ENCODE measurements at regions of chr12 and their contacts with region 1.

Region 1: DNA sequence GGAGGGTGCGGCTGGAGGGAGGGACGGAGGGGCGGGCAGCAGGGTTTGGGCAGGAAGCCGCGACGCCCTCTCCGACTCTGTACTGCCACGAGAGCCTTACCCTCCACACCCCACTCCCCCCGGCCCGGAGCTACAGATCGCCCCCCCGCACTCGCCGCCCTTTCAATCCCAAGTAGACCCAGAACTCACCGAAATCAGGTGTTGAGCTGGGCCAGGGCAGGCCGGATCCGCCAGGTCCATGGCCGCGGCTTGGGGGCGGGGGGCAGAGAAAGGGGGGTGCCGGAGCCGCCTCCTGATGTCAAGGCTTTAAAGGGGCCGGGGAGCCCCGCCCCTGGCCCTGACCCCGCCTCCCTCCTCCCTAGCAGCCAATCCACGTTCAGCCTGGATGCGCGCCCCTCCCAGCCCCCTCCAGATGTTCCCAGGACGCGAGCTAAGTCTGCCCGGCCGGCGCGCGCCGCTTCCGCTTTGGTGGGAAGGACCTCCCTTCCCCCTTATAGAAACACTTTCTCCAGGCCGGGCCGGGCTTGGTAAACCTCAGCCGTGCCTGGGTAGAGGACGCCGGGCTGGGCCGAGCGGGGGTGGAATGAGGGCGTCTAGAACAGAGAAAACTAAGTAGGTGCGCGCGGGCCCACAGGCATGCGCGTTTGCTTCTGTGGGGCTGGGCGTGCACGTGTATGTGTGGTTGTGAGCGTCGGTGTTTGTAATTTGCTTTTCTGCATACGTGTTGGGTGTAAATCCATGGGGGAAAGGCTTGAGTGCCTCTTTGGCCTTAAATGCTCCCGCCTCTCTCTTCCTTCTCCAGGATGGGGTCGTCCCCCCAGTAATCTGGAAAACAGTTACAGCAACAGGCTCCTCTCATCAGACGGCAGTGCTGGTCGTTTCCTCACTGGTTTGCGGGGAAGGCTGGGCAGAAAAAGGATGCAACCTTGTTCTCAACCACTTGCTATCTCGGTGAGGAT is at the start of gene NCKAP5L:
- DNase-seq: no peak
- ATAC-seq: peak; percentile 97
- H3K4me3 ChIP-seq: peak within 1 kb of the TSS; percentile 65 to 67
- H3K27ac ChIP-seq: peak within 1 kb of the TSS; percentile 83
- H3K4me1 ChIP-seq: peaks cover 21% of the 10 kb centered on the region
- H3K27me3 ChIP-seq: no peaks in the 10 kb centered on the region
- CTCF ChIP-seq: no peak
- total RNA-seq, gene NCKAP5L: 17.3 TPM

Region 2: DNA sequence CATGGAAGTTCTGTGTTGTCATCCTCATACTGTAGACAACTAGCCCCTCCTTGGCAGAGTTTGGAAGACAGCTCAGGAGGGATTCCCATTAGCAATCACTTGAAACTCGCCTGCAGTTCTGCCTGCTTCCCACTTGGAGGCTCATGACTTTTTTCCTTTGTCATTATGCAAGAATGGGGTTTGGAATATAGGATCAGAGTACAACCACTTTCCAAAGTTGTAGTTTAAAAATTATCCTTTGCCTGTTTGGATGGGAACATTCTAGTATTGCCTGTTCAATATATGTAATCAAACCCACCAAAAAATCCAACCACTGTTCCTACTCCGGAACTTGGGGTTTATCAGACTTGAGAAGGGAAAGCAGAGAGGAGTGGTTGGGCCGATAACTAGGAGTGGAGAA is 273.3 kb after region 1 on chr12:
- CTCF ChIA-PET with region 1: no interaction called
- POLR2A ChIA-PET with region 1: interaction called, 12 read pairs
- in situ Hi-C with region 1: no loop called
- intact Hi-C with region 1: no loop called
- DNase-seq: no peak
- ATAC-seq: peak; percentile 36; the same call in 1 of the 2 replicates
- H3K4me3 ChIP-seq: no peak overlapping the region
- H3K27ac ChIP-seq: no peak overlapping the region
- H3K4me1 ChIP-seq: peaks cover 7% of the 10 kb centered on the region; the same call in 1 of the 2 replicates
- H3K27me3 ChIP-seq: no peaks in the 10 kb centered on the region
- CTCF ChIP-seq: peak; percentile 64

Region 3: DNA sequence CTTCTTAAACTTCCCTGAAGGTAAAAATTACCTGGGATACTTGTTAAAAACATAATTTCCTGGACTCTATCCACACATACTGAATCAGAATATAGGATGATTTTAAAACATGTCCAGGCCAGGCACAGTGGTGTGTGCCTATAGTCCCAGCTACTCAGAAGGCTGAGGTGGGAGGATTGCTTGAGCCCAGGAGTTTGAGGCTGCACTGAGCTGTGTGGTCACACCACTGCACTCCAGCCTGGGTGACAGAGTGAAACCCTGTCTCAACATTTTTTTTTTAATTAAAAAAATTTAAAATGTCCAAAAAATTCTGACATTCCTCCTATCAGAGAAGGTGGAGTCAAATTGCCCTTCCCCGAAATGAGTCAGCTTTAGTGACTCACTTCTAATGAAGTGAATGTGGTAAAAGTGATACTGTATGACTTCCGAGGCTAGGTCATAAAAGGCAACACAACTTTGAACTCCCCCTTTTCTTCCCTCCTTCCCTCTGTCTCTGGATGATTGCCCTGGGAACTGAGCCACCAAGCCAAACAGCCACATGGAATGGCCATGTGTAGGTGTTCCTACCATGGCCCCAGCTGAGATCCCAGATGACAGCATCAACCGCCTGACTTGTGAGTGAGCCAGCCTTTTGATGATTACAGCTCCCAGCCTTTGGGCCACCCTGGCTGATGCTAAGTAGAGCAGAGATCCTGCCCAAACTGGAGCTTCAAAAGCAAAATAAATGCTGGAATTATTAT is 418.6 kb after region 1 on chr12:
- CTCF ChIA-PET with region 1: no interaction called
- POLR2A ChIA-PET with region 1: no interaction called
- in situ Hi-C with region 1: no loop called
- intact Hi-C with region 1: no loop called
- DNase-seq: peak; percentile 96
- ATAC-seq: peak; percentile 85
- H3K4me3 ChIP-seq: peak overlapping the region in 1 of 2 experiments; percentile 1; a peak in 1 of 4 replicates
- H3K27ac ChIP-seq: peak overlapping the region; percentile 86
- H3K4me1 ChIP-seq: peaks cover 65% of the 10 kb centered on the region
- H3K27me3 ChIP-seq: no peaks in the 10 kb centered on the region
- CTCF ChIP-seq: no peak

Region 4: DNA sequence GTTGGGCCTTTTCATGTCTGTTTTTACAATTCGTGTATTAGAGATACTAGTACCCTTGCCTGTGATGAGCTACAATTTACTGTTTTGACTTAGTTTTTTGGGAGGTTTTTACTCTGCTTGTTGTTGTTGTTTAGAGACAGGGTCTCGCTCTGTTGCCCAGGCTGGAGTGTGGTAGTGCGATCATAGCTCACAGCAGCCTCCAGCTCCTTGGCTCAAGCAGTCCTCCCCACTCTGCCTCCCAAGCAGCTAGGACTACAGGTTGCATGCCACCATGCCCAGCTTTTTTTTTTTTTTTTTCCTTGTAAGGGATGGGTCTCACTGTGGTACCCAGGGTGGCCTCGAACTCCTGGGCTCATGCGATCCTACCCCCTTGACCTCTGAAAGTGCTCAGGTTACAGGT is 624.4 kb after region 1 on chr12:
- CTCF ChIA-PET with region 1: no interaction called
- POLR2A ChIA-PET with region 1: no interaction called
- in situ Hi-C with region 1: no loop called
- intact Hi-C with region 1: no loop called
- DNase-seq: no peak
- ATAC-seq: no peak
- H3K4me3 ChIP-seq: no peak overlapping the region
- H3K27ac ChIP-seq: no peak overlapping the region
- H3K4me1 ChIP-seq: no peaks in the 10 kb centered on the region
- H3K27me3 ChIP-seq: no peaks in the 10 kb centered on the region
- CTCF ChIP-seq: no peak